Right ventricle myocardium superior (tissue), 1 donor: ENCODE measurements at regions of chr10 and their contacts with region 1.

Region 1: GRCh38 chr10:42552493-42553407 is 85.6 kb downstream of the ZNF33B start:
- DNase-seq: peak; percentile 98
- ATAC-seq: peak; percentile 100

Region 2: DNA sequence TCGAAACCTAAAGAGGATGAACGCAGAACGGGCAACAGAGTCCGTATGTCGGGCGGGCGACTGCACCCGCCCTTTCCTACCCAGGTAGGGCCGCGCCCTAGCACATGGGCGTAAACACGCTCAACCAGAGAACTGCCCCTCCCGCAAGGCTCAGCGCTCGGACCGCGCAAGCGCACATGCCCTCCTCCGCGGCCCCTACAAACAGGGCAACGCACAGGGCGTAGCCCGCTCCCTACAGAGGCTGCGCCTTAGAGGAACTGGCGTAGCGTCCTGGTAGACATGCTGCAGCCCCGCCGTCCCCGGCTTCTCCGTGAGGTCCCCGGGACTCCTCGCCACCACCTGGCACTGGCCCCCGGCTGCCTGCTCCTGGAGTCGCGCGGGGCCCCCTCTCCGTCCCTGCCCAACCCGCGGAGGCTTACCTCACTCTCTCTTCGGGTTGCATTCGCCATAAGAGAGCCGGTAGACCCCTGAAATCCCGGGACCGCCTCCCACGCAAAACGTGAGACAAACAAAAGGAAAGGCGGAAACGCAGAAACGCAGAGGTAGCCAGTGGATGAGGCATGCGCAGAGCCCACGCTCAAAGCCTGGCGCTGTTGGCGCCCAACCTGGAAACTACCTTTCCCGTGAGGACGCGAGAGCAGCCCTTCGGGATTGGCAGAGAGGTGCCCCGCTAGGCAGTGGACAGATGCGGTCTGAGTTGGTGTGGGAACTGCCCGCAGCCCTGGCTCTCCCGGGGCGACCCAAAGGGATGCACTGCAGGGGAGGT is 85.5 kb after region 1 on chr10 and contains the start of gene ZNF33B:
- intact Hi-C with region 1: loop called (anchors 5 kb)
- DNase-seq: peak; percentile 96
- ATAC-seq: peak; percentile 99
- total RNA-seq, gene ZNF33B: 14.0 TPM